HCT116 (cell line): ENCODE measurements at regions of chr22 and their contacts with region 1.

Region 1: DNA sequence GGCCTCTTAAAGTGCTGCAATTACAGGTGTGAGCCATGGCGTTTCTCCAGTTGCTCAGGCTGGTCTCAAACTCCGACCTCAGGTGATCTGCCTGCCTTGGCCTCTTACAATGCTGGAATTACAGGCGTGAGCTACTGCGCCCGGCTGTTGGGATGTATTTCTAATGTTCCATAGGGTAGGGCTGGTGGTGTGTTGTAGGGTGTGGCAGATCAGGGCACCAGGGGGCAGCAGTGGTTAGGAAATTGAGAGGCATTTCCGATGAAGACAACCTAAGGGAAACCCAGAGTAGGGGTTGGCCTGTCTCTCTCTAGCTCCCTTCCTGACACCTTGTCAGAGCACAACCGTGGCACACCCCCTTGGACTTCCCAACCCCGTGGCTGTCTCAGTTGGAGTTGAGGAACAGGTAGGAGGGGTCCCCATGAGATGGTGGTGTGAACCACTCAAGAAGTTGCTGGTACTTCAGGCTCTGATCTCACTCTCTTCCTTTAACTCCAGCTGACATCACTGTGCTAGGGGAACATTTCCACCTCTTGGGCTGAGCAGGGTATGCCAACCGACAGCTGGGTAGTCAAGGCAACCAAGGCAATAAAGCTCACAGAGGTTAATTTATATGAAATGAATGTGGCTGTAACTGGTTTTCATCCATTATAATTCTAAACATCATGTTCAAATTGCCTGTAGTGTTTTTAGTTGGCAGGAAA is 33.0 kb downstream of the YWHAH start:
- DNase-seq: peak; percentile 81
- ATAC-seq: peak; percentile 99
- H3K4me3 ChIP-seq: no peak overlapping the region
- H3K27ac ChIP-seq: no peak overlapping the region
- H3K4me1 ChIP-seq: peaks cover 0 to 6% of the 10 kb centered on the region in 2 experiments; a peak in 2 of 4 replicates
- H3K27me3 ChIP-seq: no peaks in the 10 kb centered on the region
- CTCF ChIP-seq: peak; percentile 84 to 92 (median 86)
- POLR2A ChIP-seq: no peak
- RAD21 ChIP-seq: peak; percentile 98

Region 2: GRCh38 chr22:32080904-32081303 is 103.6 kb after region 1 on chr22:
- CTCF ChIA-PET with region 1: interaction called, 129 read pairs
- POLR2A ChIA-PET with region 1: interaction called, 5 read pairs
- RAD21 ChIA-PET with region 1: interaction called, 9 to 25 read pairs
- intact Hi-C with region 1: loop called (anchors 1 kb)
- DNase-seq: peak; percentile 59
- ATAC-seq: peak; percentile 81
- H3K4me3 ChIP-seq: no peak overlapping the region
- H3K27ac ChIP-seq: no peak overlapping the region
- H3K4me1 ChIP-seq: peaks cover 18 to 24% of the 10 kb centered on the region in 2 experiments
- H3K27me3 ChIP-seq: no peaks in the 10 kb centered on the region
- CTCF ChIP-seq: peak; percentile 82 to 87 (median 83); a peak in 5 of 6 replicates
- POLR2A ChIP-seq: no peak
- RAD21 ChIP-seq: peak; percentile 93

Region 3: DNA sequence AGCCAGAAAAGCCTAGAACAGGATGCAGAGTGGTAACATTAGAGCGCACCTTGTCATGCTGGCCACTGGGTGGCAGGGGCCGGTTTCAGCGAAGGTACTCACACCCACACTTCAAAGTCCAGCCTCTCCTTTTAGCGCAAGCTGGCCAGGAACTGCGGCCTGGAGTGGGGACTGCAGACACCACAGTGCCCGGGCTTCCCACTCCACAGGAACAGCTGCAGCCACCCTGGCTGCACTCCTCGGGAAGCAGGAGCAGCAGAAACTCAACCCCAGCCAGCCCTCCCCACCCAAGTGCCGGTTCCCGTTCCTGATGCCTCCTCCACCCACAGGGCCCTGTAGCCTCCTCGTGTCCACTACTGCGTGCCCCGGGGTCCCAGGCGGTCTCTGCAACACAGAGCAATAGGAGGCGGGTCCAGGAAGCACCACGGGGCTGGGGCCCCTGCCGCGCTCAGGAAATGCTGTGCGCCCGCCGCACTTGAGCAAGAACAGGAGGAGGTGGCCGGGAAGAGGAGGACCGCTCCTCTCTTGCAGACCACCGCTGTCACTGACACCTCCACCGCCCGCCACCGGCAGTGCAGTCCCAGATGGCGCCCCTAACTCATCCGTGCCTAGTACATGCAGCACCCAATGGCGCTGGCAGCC is 225.4 kb after region 1 on chr22:
- CTCF ChIA-PET with region 1: interaction called, 9 read pairs
- POLR2A ChIA-PET with region 1: interaction called, 4 read pairs
- RAD21 ChIA-PET with region 1: no interaction called
- intact Hi-C with region 1: loop called (anchors 2 kb)
- DNase-seq: peak; percentile 50
- ATAC-seq: peak; percentile 55
- H3K4me3 ChIP-seq: no peak overlapping the region
- H3K27ac ChIP-seq: no peak overlapping the region
- H3K4me1 ChIP-seq: peaks cover 27 to 45% of the 10 kb centered on the region in 2 experiments
- H3K27me3 ChIP-seq: no peaks in the 10 kb centered on the region
- CTCF ChIP-seq: peak; percentile 62 to 73 (median 72); a peak in 5 of 6 replicates
- POLR2A ChIP-seq: no peak
- RAD21 ChIP-seq: peak; percentile 43; the same call in 1 of the 2 replicates

Region 4: GRCh38 chr22:32354360-32355351 is 377.4 kb after region 1 on chr22:
- CTCF ChIA-PET with region 1: no interaction called
- POLR2A ChIA-PET with region 1: no interaction called
- RAD21 ChIA-PET with region 1: no interaction called
- intact Hi-C with region 1: loop called (anchors 5 kb)
- DNase-seq: peak; percentile 49
- ATAC-seq: peak; percentile 46
- H3K4me3 ChIP-seq: peak overlapping the region; percentile 8 to 9; a peak in 1 of 4 replicates
- H3K27ac ChIP-seq: no peak overlapping the region
- H3K4me1 ChIP-seq: peaks cover 0 to 6% of the 10 kb centered on the region in 2 experiments; a peak in 1 of 4 replicates
- H3K27me3 ChIP-seq: no peaks in the 10 kb centered on the region
- CTCF ChIP-seq: no peak
- POLR2A ChIP-seq: no peak
- RAD21 ChIP-seq: no peak

Region 5: GRCh38 chr22:32474635-32475467 is 497.6 kb after region 1 on chr22 and contains the start of gene FBXO7:
- CTCF ChIA-PET with region 1: interaction called, 7 read pairs
- POLR2A ChIA-PET with region 1: no interaction called
- RAD21 ChIA-PET with region 1: no interaction called
- intact Hi-C with region 1: loop called (anchors 5 kb)
- DNase-seq: peak; percentile 80
- ATAC-seq: peak; percentile 83
- H3K4me3 ChIP-seq: peak within 1 kb of the TSS; percentile 69 to 79
- H3K27ac ChIP-seq: peak within 1 kb of the TSS; percentile 98
- H3K4me1 ChIP-seq: peaks cover 18 to 20% of the 10 kb centered on the region in 2 experiments
- H3K27me3 ChIP-seq: no peaks in the 10 kb centered on the region
- CTCF ChIP-seq: 0 out of 6 replicates have a peak, but pooled peaks of 1 of the 3 experiments have one; percentile 3
- POLR2A ChIP-seq: peak; percentile 74
- RAD21 ChIP-seq: no peak
- total RNA-seq, gene FBXO7: 69.2 TPM